ENCODE measurements at regions of chr14 and their contacts with region 1.

Region 1: GRCh38 chr14:103576371-103577024 is 13.7 kb downstream of the COA8 start:
- DNase-seq: peak; percentile 96
- ATAC-seq: peak; percentile 98 to 99

Region 2: GRCh38 chr14:103436533-103436932 is 140.0 kb before region 1 on chr14:
- intact Hi-C with region 1: no loop called
- DNase-seq: no peak
- ATAC-seq: no peak

Region 3: GRCh38 chr14:103628684-103629502 is 52.4 kb after region 1 on chr14 and contains the start of gene KLC1:
- intact Hi-C with region 1: loop called in 1 of 2 experiments (anchors 10 kb)
- DNase-seq: peak; percentile 88
- ATAC-seq: peak; percentile 86 to 93
- total RNA-seq, gene KLC1: 118 to 139 TPM

Region 4: DNA sequence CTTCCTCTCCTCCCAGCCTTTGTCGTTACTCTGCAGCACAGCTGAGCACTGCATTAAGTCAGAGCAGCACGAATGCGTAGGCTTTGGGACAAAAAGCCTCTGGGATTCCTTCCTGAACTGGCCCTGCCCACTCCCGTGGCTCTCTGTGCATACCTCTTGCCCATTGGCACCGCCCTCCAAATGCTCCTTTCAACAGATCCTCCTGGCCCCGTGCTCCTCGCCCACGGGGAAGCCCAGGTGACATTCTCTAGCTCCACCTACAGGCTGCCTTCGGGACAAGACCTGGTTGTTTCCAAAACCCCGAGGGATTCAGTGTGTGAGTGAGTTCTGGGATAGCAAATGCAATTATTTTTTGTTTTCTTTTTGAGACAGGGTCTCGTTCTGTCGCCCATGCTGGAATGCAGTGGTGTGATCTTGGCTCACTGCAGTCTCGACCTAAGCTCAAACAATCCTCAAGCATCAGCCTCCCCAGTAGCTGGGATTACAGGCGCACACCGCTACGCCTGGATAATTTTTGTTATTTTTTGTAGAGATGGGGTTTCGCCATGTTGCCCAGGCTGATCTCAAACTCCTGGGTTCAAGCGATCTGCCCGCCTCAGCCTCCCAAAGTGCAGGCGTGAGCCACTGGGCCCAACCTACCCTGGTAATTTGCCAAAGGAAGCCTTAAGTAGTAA is 333.9 kb after region 1 on chr14:
- intact Hi-C with region 1: loop called in 1 of 2 experiments (anchors 10 kb)
- DNase-seq: peak; percentile 84
- ATAC-seq: peak; percentile 95 to 97

Region 5: DNA sequence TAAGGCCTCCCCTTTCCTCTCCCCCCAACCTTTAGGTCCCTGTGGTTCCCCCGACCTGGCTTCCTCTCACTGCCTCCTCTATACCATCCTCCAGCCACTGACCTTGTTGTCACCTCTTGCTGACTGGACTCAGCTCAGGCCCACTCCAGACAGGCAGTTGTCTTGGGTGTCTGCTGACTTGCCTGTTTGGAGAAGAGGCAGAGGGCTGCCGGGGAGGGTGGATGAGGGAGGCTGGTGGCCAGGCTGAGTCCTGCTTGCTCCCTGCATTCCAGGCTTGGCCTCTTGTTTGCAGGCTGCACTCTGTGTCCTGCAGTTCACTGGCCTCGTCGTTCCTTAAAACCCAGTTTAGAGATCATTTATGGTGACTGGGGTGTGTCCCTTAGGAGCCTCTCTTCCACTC is 396.9 kb after region 1 on chr14:
- intact Hi-C with region 1: loop called in 1 of 2 experiments (anchors 5 kb)
- DNase-seq: no peak
- ATAC-seq: peak in 1 of 2 donors; percentile 25

Measured in left cardiac atrium (tissue), 4 donors.